SK-N-SH (cell line): ENCODE measurements at regions of chr11 and their contacts with region 1.

Region 1: GRCh38 chr11:119409731-119410130 is 13.2 kb downstream of the THY1 start:
- DNase-seq: no peak
- H3K4me3 ChIP-seq: no peak overlapping the region
- H3K27ac ChIP-seq: no peak overlapping the region
- H3K4me1 ChIP-seq: peaks cover 0 to 5% of the 10 kb centered on the region in 2 experiments; a peak in 2 of 4 replicates
- H3K27me3 ChIP-seq: no peaks in the 10 kb centered on the region
- CTCF ChIP-seq: no peak
- EP300 ChIP-seq: no peak
- RAD21 ChIP-seq: no peak

Region 2: GRCh38 chr11:119373921-119374631 is 35.7 kb before region 1 on chr11:
- CTCF ChIA-PET with region 1: interaction called, 10 read pairs
- POLR2A ChIA-PET with region 1: no interaction called
- DNase-seq: peak; percentile 84
- H3K4me3 ChIP-seq: peak overlapping the region in 1 of 2 experiments; percentile 27; a peak in 2 of 4 replicates
- H3K27ac ChIP-seq: peak overlapping the region in 1 of 2 experiments; percentile 98; a peak in 2 of 4 replicates
- H3K4me1 ChIP-seq: peaks cover 9 to 94% of the 10 kb centered on the region in 2 experiments
- H3K27me3 ChIP-seq: no peaks in the 10 kb centered on the region
- CTCF ChIP-seq: peak; percentile 88
- EP300 ChIP-seq: peak in 1 of 2 experiments; percentile 26; a peak in 1 of 4 replicates
- RAD21 ChIP-seq: peak; percentile 96

Region 3: GRCh38 chr11:119381181-119381988 is 28.3 kb before region 1 on chr11 and contains the start of gene USP2:
- CTCF ChIA-PET with region 1: interaction called, 14 read pairs
- POLR2A ChIA-PET with region 1: no interaction called
- DNase-seq: peak; percentile 96
- H3K4me3 ChIP-seq: peak within 1 kb of the TSS; percentile 57 to 62
- H3K27ac ChIP-seq: peak within 1 kb of the TSS in 1 of 2 experiments; percentile 31; a peak in 1 of 4 replicates
- H3K4me1 ChIP-seq: peaks cover 4 to 42% of the 10 kb centered on the region in 2 experiments; a peak in 3 of 4 replicates
- H3K27me3 ChIP-seq: no peaks in the 10 kb centered on the region
- CTCF ChIP-seq: peak; percentile 83
- EP300 ChIP-seq: no peak
- RAD21 ChIP-seq: peak; percentile 70
- polyA plus RNA-seq, gene USP2: 0.81 and 0.97 TPM in 2 replicates

Region 4: GRCh38 chr11:119421941-119422808 is 12.4 kb after region 1 on chr11:
- CTCF ChIA-PET with region 1: interaction called, 14 read pairs
- POLR2A ChIA-PET with region 1: no interaction called
- DNase-seq: peak; percentile 79
- H3K4me3 ChIP-seq: peak overlapping the region; percentile 87 to 96
- H3K27ac ChIP-seq: peak overlapping the region; percentile 70 to 89
- H3K4me1 ChIP-seq: peaks cover 22 to 63% of the 10 kb centered on the region in 2 experiments
- H3K27me3 ChIP-seq: no peaks in the 10 kb centered on the region
- CTCF ChIP-seq: no peak
- EP300 ChIP-seq: no peak
- RAD21 ChIP-seq: no peak